ENCODE measurements at regions of chr5 and their contacts with region 1.

Region 1: DNA sequence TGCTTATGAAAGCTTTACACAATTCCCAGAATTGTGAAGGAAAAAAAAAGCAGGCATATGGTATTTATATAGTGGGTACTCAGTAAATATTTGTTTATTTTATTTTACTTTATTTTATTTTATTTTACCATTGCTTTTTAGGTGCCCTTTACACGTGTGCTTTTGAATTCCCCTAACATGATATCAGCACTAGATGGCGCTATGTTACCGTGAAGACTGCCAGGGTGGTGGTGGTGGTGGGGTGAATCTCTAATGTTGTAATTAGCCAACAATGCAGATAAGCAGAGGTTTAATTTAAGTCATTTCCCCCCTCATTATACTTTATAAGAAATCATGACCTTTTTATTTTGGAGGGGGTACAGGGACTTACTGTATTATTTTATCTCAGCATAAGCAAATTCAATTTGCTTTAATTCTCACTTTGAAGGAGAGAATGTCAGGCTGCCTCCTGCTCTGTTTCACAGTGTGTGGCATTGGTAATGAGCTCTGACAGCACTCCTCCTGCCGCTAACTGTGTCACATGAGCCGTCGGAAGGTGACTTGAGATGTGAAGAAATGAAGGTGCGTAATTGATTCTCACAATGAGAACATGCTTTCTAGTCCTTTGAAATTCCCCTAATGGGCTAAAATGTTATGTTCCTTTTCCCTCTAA is 165.6 kb downstream of the YTHDC2 start:
- DNase-seq: peak; percentile 18
- ATAC-seq: peak; percentile 88
- H3K4me3 ChIP-seq: no peak overlapping the region
- H3K27ac ChIP-seq: no peak overlapping the region
- H3K4me1 ChIP-seq: no peaks in the 10 kb centered on the region
- H3K27me3 ChIP-seq: peaks cover 3% of the 10 kb centered on the region; the same call in 1 of the 2 replicates
- CTCF ChIP-seq: peak; percentile 72

Region 2: DNA sequence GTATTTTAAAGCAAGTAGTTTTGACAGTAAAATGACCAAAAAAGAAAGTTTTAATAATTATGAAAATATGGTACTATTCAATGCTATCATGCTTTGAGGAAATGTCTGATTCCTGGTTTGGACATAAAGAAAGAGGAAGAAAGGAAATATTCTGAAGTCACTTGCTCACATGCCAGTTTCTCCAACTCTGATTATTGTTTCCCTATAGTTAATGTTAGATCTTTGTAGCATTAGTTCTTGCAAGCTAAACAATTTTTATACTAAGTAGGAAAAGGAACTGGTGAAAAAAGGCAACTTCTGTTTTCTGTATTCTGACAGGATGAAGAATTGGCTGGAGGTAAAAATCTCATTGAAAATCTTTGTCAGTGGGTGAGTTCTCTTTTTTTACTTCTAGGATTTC is 46.1 kb before region 1 on chr5:
- CTCF ChIA-PET with region 1: no interaction called
- POLR2A ChIA-PET with region 1: no interaction called
- in situ Hi-C with region 1: no loop called
- intact Hi-C with region 1: no loop called
- DNase-seq: no peak
- ATAC-seq: no peak
- H3K4me3 ChIP-seq: no peak overlapping the region
- H3K27ac ChIP-seq: no peak overlapping the region
- H3K4me1 ChIP-seq: no peaks in the 10 kb centered on the region
- H3K27me3 ChIP-seq: no peaks in the 10 kb centered on the region; the same call in 1 of the 2 replicates
- CTCF ChIP-seq: no peak

Region 3: DNA sequence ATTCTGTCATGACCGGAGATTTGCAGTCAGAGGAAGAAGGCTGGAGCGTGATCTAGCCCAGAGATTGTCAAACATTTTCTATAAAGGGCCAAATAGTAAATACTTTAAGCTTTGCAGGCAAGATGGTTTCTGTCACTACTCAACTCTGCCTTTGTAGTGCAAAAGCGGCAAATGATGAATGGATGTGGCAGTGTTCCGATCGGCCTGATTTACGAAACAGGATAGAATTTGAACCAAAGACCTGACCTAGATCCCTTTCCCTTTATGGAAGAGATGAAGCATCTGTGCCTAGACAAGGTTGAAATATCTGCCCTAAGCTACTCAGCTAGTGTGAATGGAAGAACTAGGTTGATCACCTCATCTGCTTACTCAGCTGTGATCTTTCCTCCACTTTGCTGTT is 44.0 kb after region 1 on chr5:
- CTCF ChIA-PET with region 1: no interaction called
- POLR2A ChIA-PET with region 1: no interaction called
- in situ Hi-C with region 1: no loop called
- intact Hi-C with region 1: no loop called
- DNase-seq: no peak
- ATAC-seq: no peak
- H3K4me3 ChIP-seq: no peak overlapping the region
- H3K27ac ChIP-seq: no peak overlapping the region
- H3K4me1 ChIP-seq: no peaks in the 10 kb centered on the region
- H3K27me3 ChIP-seq: no peaks in the 10 kb centered on the region
- CTCF ChIP-seq: no peak

Region 4: GRCh38 chr5:114358329-114358728 is 679.3 kb after region 1 on chr5:
- CTCF ChIA-PET with region 1: no interaction called
- POLR2A ChIA-PET with region 1: no interaction called
- in situ Hi-C with region 1: no loop called
- intact Hi-C with region 1: loop called (anchors 10 kb)
- DNase-seq: no peak
- ATAC-seq: no peak
- H3K4me3 ChIP-seq: no peak overlapping the region
- H3K27ac ChIP-seq: no peak overlapping the region
- H3K4me1 ChIP-seq: no peaks in the 10 kb centered on the region
- H3K27me3 ChIP-seq: peaks cover 13% of the 10 kb centered on the region
- CTCF ChIP-seq: peak; percentile 27; the same call in 1 of the 2 replicates

Region 5: GRCh38 chr5:115069087-115069968 is 1390.3 kb after region 1 on chr5:
- CTCF ChIA-PET with region 1: no interaction called
- POLR2A ChIA-PET with region 1: no interaction called
- in situ Hi-C with region 1: no loop called
- intact Hi-C with region 1: loop called (anchors 1 kb)
- DNase-seq: no peak
- ATAC-seq: peak; percentile 83
- H3K4me3 ChIP-seq: no peak overlapping the region
- H3K27ac ChIP-seq: no peak overlapping the region
- H3K4me1 ChIP-seq: no peaks in the 10 kb centered on the region
- H3K27me3 ChIP-seq: no peaks in the 10 kb centered on the region
- CTCF ChIP-seq: peak; percentile 76